GM12878 (cell line): ENCODE measurements at regions of chr1 and their contacts with region 1.

Region 1: GRCh38 chr1:167627865-167628641 is 2.0 kb upstream of the RCSD1 start:
- DNase-seq: peak; percentile 89
- ATAC-seq: peak; percentile 77
- H3K4me3 ChIP-seq: peak overlapping the region; percentile 79
- H3K27ac ChIP-seq: peak overlapping the region; percentile 94
- H3K4me1 ChIP-seq: peaks cover 26% of the 10 kb centered on the region
- H3K27me3 ChIP-seq: no peaks in the 10 kb centered on the region
- CTCF ChIP-seq: no peak
- EP300 ChIP-seq: peak; percentile 80 to 84
- POLR2A ChIP-seq: peak; percentile 89
- RAD21 ChIP-seq: no peak

Region 2: GRCh38 chr1:167553136-167554027 is 74.7 kb before region 1 on chr1 and contains the start of gene CREG1:
- CTCF ChIA-PET with region 1: interaction called, 6 read pairs
- POLR2A ChIA-PET with region 1: interaction called, 5 read pairs
- RAD21 ChIA-PET with region 1: interaction called, 5 read pairs
- SMC1A ChIA-PET with region 1: interaction called, 4 read pairs
- in situ Hi-C with region 1: no loop called
- intact Hi-C with region 1: loop called (anchors 10 kb)
- DNase-seq: no peak
- ATAC-seq: peak; percentile 97
- H3K4me3 ChIP-seq: peak within 1 kb of the TSS; percentile 72
- H3K27ac ChIP-seq: peak within 1 kb of the TSS; percentile 51
- H3K4me1 ChIP-seq: peaks cover 9% of the 10 kb centered on the region
- H3K27me3 ChIP-seq: no peaks in the 10 kb centered on the region
- CTCF ChIP-seq: no peak
- EP300 ChIP-seq: no peak
- POLR2A ChIP-seq: peak; percentile 93
- RAD21 ChIP-seq: no peak
- polyA plus RNA-seq, gene CREG1: 5.3 to 11.3 TPM

Region 3: DNA sequence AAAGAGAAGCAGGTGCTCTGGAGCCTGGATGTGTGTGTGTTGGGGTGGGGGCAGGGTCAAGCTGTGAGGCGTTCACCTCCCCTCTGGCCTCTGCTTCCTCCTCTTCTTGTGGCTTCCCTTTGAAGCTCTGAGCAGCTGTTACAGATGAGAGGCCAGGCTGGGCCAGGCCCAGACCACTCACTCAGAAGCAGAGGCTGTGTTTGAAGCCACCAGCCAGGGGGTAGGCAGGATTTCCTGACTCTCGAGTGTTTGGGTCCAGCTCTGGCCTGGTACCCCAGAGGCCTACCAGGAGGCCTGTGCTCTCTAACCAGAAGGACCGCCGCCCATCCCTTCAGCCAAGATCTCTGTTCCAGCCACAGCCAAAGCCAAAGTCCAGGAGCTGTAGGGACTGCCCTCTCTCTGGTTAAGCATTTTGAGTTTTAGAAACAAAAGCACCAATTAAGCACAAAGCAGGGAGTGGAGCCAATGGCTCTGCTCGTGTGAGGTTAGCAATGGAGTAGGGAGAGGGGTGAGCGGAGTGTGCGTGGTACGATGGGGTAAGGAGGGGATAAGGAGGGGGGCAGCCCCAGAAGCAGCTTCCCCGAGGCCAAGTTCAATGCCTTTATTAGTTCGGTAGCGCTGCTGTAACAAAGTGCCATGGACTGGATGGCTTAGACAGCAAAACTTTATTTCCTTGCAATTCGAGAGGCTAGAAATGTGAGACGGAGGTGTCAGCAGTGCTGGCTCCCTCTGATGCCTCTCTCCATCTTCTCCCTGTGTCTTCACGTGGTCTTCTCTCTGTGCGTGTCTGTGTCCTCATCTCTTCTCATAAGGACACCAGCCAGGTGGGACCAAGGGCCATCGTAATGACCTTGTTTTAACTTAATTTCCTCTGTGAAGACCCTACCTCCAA is 22.5 kb after region 1 on chr1:
- CTCF ChIA-PET with region 1: interaction called, 3 read pairs
- POLR2A ChIA-PET with region 1: interaction called, 14 read pairs
- RAD21 ChIA-PET with region 1: interaction called, 25 read pairs
- SMC1A ChIA-PET with region 1: interaction called, 70 read pairs
- in situ Hi-C with region 1: no loop called
- intact Hi-C with region 1: no loop called
- DNase-seq: no peak
- ATAC-seq: peak; percentile 92
- H3K4me3 ChIP-seq: no peak overlapping the region
- H3K27ac ChIP-seq: peak overlapping the region; percentile 55
- H3K4me1 ChIP-seq: peaks cover 39% of the 10 kb centered on the region
- H3K27me3 ChIP-seq: no peaks in the 10 kb centered on the region
- CTCF ChIP-seq: no peak
- EP300 ChIP-seq: no peak
- POLR2A ChIP-seq: peak; percentile 23; the same call in 1 of the 2 replicates
- RAD21 ChIP-seq: no peak

Region 4: DNA sequence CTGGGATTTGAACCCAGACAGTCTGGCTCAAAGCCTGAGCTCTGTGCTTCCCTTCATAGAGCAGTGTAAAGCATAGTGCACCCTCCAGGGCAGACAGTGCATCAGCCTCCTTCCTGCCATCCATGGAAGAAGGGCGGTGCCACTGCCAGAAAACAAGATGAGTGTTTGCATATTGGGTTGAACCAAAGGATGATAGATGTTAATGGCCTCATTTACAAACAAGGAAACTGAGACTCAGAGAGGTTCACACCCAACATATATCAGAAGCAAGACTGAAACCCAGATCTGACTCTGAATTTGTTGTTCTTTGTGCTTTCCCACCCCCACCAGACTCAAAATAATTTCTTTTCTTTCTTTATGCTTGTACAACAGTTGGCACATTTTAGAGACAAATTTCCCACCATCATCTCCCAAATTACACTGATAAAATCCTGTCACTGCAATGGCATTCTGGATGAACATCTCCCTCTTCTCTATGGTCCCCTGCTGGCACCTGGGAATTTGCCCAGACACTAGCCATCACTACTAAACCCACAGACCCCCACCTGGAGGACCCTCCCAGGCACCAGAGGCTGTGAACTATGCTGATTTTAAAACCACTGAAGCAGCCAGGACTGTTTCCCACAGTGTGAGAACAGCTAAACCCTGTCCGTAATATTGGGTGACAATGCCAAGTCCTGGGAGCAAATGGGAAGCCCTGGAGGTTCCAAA is 48.3 kb after region 1 on chr1:
- CTCF ChIA-PET with region 1: interaction called, 12 read pairs
- POLR2A ChIA-PET with region 1: interaction called, 84 read pairs
- RAD21 ChIA-PET with region 1: interaction called, 100 read pairs
- SMC1A ChIA-PET with region 1: interaction called, 170 read pairs
- in situ Hi-C with region 1: no loop called
- intact Hi-C with region 1: loop called (anchors 1 kb)
- DNase-seq: peak; percentile 88
- ATAC-seq: peak; percentile 76
- H3K4me3 ChIP-seq: peak overlapping the region; percentile 35; the same call in 1 of the 2 replicates
- H3K27ac ChIP-seq: peak overlapping the region; percentile 93
- H3K4me1 ChIP-seq: peaks cover 85% of the 10 kb centered on the region
- H3K27me3 ChIP-seq: no peaks in the 10 kb centered on the region
- CTCF ChIP-seq: peak in 2 of 3 experiments; percentile 5 to 12; a peak in 2 of 6 replicates
- EP300 ChIP-seq: peak; percentile 10 to 11; a peak in 1 of 4 replicates
- POLR2A ChIP-seq: no peak
- RAD21 ChIP-seq: no peak

Region 5: DNA sequence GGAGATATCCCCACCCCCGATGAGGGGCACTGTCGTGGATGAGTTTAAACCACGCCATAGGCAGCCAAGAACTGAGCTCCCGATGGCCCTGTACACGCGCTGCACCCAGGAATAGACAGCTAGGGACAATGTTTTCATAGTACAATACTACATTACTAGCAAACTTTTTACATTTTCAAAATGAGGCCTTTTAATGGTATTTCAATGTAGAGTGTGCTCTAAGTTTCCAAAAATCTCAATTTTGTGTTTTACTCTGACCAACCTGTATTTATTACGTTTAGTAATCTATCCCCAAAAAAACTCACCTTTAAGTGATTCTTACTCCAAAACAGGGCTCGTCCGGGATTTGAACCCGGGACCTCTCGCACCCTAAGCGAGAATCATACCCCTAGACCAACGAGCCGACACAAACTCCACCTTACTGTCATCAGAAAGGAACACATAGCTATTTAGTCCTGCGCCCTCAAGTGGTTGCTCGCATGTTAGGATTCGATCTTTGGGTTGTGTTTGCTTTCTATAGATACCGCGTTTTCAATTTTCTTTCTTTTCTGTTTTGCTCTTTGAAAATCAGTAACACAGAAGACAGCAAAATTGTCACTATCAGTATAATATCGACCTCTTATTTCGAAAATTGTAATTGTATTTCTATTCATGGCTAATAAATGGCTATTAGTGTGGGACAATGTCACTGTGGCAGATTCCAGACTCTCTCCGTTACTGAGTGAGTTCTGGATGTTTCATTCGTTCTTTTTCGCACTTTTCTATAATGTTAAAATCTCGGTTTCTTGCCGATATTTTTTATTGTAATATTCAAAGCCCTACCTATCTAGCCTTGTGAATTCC is 87.3 kb after region 1 on chr1:
- CTCF ChIA-PET with region 1: interaction called, 4 read pairs
- POLR2A ChIA-PET with region 1: interaction called, 10 read pairs
- RAD21 ChIA-PET with region 1: interaction called, 6 read pairs
- SMC1A ChIA-PET with region 1: interaction called, 3 read pairs
- in situ Hi-C with region 1: no loop called
- intact Hi-C with region 1: no loop called
- DNase-seq: peak; percentile 97
- ATAC-seq: peak; percentile 40
- H3K4me3 ChIP-seq: peak overlapping the region; percentile 95
- H3K27ac ChIP-seq: peak overlapping the region; percentile 98
- H3K4me1 ChIP-seq: peaks cover 24% of the 10 kb centered on the region
- H3K27me3 ChIP-seq: no peaks in the 10 kb centered on the region
- CTCF ChIP-seq: peak; percentile 72 to 99 (median 80)
- EP300 ChIP-seq: 0 out of 4 replicates have a peak, but pooled peaks of 1 of the 2 experiments have one; percentile 60
- POLR2A ChIP-seq: no peak
- RAD21 ChIP-seq: peak; percentile 43; the same call in 1 of the 2 replicates

Region 6: GRCh38 chr1:167837326-167837725 is 209.3 kb after region 1 on chr1:
- CTCF ChIA-PET with region 1: no interaction called
- POLR2A ChIA-PET with region 1: no interaction called
- RAD21 ChIA-PET with region 1: no interaction called
- SMC1A ChIA-PET with region 1: no interaction called
- in situ Hi-C with region 1: no loop called
- intact Hi-C with region 1: no loop called
- DNase-seq: no peak
- ATAC-seq: no peak
- H3K4me3 ChIP-seq: no peak overlapping the region
- H3K27ac ChIP-seq: no peak overlapping the region
- H3K4me1 ChIP-seq: no peaks in the 10 kb centered on the region
- H3K27me3 ChIP-seq: no peaks in the 10 kb centered on the region
- CTCF ChIP-seq: no peak
- EP300 ChIP-seq: no peak
- POLR2A ChIP-seq: no peak
- RAD21 ChIP-seq: no peak